Cardiac septum (tissue), 1 donor: ENCODE measurements at regions of chr1 and their contacts with region 1.

Region 1: DNA sequence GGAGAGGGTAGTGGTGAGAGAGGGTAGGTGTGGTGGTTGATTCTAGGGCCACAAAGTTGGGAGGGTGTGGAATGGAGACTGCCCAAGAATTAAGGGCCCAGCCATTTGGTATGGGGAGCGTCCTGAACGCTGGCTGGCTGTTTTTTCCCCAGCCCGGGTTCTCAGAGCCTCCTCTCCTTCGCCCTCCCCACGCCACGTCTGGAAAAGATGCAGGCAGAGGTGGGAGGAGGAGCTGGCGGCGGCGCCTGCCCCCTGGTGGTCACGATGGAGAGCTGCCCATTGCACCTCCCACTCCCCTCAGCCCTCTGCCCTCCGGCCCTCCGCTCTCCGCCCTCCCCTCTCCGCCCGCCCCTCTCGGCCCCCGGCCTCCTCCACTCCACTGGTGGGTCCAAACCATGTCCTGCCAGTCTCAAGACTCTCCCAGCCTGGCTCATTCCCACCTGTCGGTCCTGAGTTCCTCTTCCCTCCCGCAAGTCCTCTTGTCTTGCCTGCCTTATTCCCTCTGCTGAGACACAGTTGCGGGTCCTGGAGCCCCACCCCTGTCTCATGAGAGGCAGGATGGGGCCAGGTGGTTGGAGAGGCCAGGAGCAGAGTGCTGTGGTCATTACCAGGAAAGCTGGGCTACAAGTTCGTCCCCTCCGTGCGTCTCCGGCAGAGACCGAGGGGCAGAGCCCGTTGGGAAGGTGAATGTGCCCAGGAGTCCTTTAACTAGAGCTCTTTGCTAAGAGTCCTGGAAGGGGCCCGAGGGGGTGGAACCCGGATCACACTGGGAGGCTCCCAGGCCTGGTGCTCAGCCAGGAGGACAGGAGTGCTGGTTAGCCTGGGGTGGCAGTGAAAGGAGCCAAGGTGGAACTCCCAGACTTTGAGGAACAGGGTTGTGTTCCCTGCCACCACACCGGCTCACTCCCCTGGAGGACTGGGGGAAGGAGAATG is 22.6 kb downstream of the ETNK2 start:
- DNase-seq: peak; percentile 91

Region 2: GRCh38 chr1:203861379-203862184 is 267.6 kb before region 1 on chr1 and contains the start of gene SNRPE:
- intact Hi-C with region 1: loop called (anchors 1 kb)
- DNase-seq: peak; percentile 98
- total RNA-seq, gene SNRPE: 47.8 TPM

Region 3: DNA sequence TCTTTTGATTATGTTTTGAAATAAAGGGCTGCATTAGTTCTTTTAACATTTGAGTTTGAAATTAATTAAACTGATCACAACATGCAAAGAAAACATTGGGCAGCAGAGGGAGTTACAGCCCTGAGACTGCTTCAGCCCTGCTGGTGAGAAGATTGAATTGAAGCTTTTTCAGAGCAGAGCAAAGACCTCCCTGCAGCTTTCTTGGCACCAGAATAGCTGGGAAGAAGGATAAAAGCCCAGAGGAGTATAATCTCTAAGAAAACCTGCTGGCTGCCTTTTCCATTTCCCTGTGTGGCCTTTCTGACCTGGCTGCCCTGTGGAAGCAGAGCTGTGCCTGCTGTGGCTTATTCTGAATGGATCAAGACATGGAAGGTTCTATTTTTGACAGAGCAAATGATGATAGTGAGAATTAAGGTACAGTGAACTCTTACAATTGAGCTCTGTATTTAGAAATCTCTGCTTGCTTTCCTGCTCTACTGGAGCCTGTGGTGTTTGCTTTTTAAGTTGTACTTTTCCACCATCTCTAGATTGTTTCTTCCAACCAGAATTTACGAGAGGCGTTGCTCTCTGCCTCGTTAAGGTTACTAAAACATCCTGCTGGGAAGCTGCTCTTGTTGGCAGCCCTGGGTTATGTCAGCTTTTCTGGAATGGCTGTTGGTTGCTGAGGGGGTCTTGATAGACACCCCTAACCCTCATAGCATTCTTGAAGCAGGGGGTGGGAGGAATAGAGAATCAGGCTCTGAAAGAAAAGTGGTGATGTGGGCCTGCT is 257.9 kb before region 1 on chr1:
- intact Hi-C with region 1: loop called (anchors 1 kb)
- DNase-seq: no peak

Region 4: GRCh38 chr1:204072931-204073836 is 56.0 kb before region 1 on chr1 and contains the start of gene SOX13:
- intact Hi-C with region 1: loop called (anchors 5 kb)
- DNase-seq: peak; percentile 83
- total RNA-seq, gene SOX13: 17.9 TPM

Region 5: DNA sequence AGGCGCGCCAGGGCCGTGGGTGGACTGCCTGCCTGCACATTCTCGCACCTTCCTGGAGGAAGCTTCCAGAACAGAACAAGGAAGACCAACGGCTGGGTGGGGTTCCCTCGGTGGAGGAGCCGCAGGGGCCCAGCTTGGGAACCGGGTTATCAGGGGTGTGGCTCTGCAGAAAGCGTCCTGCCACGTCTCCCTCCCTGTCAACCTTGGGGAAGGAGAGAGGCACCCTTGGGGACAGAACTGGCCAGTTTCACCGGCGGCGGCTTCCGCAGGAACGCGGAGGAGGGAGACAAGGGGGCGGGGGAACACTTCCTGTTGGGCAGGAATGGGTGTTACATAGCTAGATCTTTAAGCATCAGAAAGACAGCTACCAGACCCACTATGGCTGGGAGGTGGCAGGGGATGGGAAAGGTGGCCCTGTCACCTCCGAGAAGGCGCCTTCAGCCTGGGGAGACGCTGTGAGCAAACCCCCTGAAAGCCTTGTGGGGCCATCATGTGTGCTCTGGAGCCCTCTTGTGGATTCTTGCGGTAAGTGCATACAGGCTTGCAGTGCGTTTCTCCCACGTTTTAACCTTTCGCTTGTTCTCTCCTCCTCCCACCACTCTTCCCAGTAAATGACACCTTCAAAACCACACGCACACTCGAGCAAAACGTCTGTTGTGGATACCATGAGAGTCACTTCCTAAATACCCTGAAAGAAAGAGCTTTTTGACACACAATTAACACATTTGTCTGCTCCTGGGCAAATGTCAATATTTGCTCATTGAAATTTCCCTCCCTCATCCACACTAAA is 234.3 kb after region 1 on chr1:
- intact Hi-C with region 1: no loop called
- DNase-seq: peak; percentile 86